ENCODE measurements at regions of chr6 and their contacts with region 1.

Region 1: GRCh38 chr6:68778356-68779020 is 143.4 kb downstream of the ADGRB3 start:
- DNase-seq: no peak
- ATAC-seq: peak; percentile 83 to 96 (median 88)
- H3K4me3 ChIP-seq: no peak overlapping the region
- H3K27ac ChIP-seq: no peak overlapping the region
- H3K4me1 ChIP-seq: no peaks in the 10 kb centered on the region
- H3K27me3 ChIP-seq: no peaks in the 10 kb centered on the region
- CTCF ChIP-seq: peak; percentile 59 to 83 (median 76)
- POLR2A ChIP-seq: no peak

Region 2: GRCh38 chr6:68634726-68635411 is 143.6 kb before region 1 on chr6 and contains the start of gene ADGRB3:
- intact Hi-C with region 1: loop called in 1 of 2 experiments (anchors 5 kb)
- DNase-seq: peak; percentile 62 to 73 (median 69)
- ATAC-seq: peak; percentile 80 to 94 (median 89)
- H3K4me3 ChIP-seq: peak within 1 kb of the TSS; percentile 45 to 60 (median 56)
- H3K27ac ChIP-seq: peak within 1 kb of the TSS; percentile 25 to 48 (median 41)
- H3K4me1 ChIP-seq: peaks cover 0 to 4% (median 0%) of the 10 kb centered on the region in 4 donors
- H3K27me3 ChIP-seq: peaks cover 0 to 17% of the 10 kb centered on the region in 2 donors
- CTCF ChIP-seq: peak in 1 of 4 donors; percentile 11
- POLR2A ChIP-seq: no peak
- total RNA-seq, gene ADGRB3: 0.18 to 0.42 (median 0.24) TPM

Measured in right lobe of liver (tissue), 6 donors.